T-cell (primary cell): ENCODE measurements at regions of chr3 and their contacts with region 1.

Region 1: DNA sequence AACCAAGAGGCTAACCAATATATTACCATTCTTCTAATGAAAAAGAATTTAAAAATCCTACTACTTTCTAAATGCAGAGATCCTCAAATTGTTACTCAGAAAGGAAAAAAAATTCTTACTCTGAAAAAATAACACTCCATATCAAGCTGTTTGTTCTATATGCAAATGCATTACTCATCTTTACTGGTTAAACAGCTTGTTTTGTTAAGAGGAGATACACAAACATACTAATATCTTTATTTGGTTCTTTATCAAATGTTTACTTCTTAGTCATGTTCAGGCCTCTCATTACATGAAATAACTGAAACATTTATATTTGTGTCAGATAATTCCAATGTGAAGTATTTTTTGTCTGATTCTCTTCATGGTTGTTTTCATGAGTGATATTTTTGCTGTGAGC is 146.8 kb downstream of the PCCB start:
- DNase-seq: no peak
- ATAC-seq: no peak
- H3K4me3 ChIP-seq: no peak overlapping the region
- H3K4me3 Mint-ChIP-seq: no peak overlapping the region
- H3K27ac ChIP-seq: no peak overlapping the region
- H3K27ac Mint-ChIP-seq: no peak overlapping the region
- H3K4me1 ChIP-seq: no peaks in the 10 kb centered on the region
- H3K4me1 Mint-ChIP-seq: no peaks in the 10 kb centered on the region
- H3K27me3 ChIP-seq: no peaks in the 10 kb centered on the region
- H3K27me3 Mint-ChIP-seq: no peaks in the 10 kb centered on the region

Region 2: GRCh38 chr3:135950941-135951340 is 446.0 kb before region 1 on chr3:
- CTCF ChIA-PET with region 1: no interaction called
- POLR2A ChIA-PET with region 1: no interaction called
- DNase-seq: no peak
- ATAC-seq: no peak
- H3K4me3 ChIP-seq: no peak overlapping the region
- H3K4me3 Mint-ChIP-seq: no peak overlapping the region
- H3K27ac ChIP-seq: no peak overlapping the region
- H3K27ac Mint-ChIP-seq: no peak overlapping the region
- H3K4me1 ChIP-seq: no peaks in the 10 kb centered on the region
- H3K4me1 Mint-ChIP-seq: no peaks in the 10 kb centered on the region
- H3K27me3 ChIP-seq: no peaks in the 10 kb centered on the region
- H3K27me3 Mint-ChIP-seq: peaks cover 7 to 18% of the 10 kb centered on the region in 2 donors

Region 3: DNA sequence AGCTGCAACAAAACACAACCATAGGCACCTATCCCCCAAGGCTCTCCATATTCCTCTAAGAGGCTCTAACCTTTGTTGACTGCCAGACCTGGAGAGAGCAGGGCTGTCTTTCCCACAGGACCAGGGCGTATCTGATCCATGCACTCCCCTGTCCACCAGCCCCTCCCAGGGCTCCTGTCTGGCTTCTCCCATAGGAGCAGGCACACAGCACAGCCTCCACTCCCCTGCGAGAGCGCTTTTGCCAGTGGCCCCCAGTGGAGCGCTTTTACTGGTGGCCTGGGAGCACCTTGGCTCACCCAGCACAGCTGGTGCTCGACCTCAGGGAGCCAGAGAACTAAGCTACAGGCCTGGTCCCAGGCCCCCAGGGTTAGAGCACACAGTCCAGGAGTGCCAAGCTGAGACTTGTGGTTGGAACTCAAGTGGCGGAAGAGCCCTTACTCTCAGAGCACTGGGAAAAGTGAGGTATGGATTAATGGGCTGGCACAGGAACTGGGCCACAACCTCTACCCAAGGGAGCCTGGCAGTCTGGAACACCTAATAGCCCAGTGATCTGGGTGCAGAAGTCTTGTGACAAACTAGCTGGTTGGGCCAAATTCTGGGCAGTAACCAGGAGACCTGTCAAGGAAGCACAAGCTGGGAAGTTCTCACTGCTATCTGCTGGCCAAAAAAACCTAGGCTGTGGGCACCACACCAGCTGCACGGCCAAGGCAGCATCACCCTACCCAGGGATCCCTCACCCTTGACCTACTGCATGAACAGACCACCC is 351.8 kb before region 1 on chr3:
- CTCF ChIA-PET with region 1: interaction called in 1 of 2 experiments, 11 read pairs
- POLR2A ChIA-PET with region 1: no interaction called
- DNase-seq: no peak
- ATAC-seq: no peak
- H3K4me3 ChIP-seq: no peak overlapping the region
- H3K4me3 Mint-ChIP-seq: no peak overlapping the region
- H3K27ac ChIP-seq: no peak overlapping the region
- H3K27ac Mint-ChIP-seq: no peak overlapping the region
- H3K4me1 ChIP-seq: no peaks in the 10 kb centered on the region
- H3K4me1 Mint-ChIP-seq: no peaks in the 10 kb centered on the region
- H3K27me3 ChIP-seq: peaks cover 0 to 13% of the 10 kb centered on the region in 2 experiments
- H3K27me3 Mint-ChIP-seq: peaks cover 10 to 21% of the 10 kb centered on the region in 2 donors